K562 (cell line): ENCODE measurements at regions of chr16 and their contacts with region 1.

Region 1: DNA sequence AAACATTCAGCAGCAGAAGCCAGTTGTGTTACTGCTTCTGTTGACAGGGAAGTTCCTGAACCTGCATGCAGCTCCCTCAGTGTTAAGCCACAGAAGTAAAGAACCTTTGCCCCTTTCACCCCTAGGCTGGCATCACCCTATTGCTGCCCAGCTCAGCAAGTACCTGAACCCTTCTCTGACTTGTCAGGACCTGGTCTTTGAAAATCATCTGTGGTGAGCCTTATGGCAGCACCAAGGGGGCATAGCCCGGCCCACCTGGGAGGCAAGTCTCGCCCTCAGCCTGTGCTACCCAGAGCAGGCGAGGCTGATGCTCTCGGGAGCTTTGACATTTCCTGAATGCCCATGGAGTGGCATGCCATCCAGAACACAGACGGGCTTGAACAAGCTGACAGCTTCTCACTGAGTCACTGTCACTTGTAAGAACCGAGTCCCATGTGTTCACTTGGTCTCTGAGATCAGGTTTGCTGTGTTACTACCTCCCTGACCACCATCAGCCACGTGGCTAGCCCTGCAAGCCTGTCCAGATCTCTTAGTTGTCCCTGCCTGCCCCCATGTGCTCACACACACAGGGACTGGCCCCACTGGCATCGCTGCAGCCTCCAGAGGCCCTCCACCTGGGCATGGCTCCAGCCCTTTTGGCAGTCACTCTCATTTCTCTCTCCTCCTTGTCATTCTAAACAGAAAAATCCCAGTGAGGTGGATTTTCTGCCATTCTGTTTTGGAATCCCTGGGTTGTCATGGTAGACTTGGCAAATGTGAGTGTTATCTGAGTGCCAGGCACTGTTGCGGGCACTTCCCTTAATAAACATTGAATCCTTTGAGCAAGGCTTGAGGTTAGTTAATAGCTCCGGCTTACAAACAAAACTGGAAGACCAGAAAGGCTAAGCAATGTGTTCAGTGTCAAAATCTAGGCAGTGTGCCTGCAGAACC is 2.9 kb upstream of the CARMIL2 start:
- DNase-seq: no peak
- ATAC-seq: no peak; the same call in 2 of the 3 replicates
- H3K4me3 ChIP-seq: no peak overlapping the region
- H3K27ac ChIP-seq: no peak overlapping the region
- H3K4me1 ChIP-seq: peaks cover 0 to 26% of the 10 kb centered on the region in 2 experiments; a peak in 2 of 5 replicates
- H3K27me3 ChIP-seq: peaks cover 0 to 5% of the 10 kb centered on the region in 2 experiments; a peak in 1 of 5 replicates
- CTCF ChIP-seq: 0 out of 6 replicates have a peak, but pooled peaks of 1 of the 3 experiments have one; percentile 12
- EP300 ChIP-seq: no peak
- POLR2A ChIP-seq: no peak
- RAD21 ChIP-seq: 0 out of 4 replicates have a peak, but pooled peaks of 1 of the 2 experiments have one; percentile 6

Region 2: DNA sequence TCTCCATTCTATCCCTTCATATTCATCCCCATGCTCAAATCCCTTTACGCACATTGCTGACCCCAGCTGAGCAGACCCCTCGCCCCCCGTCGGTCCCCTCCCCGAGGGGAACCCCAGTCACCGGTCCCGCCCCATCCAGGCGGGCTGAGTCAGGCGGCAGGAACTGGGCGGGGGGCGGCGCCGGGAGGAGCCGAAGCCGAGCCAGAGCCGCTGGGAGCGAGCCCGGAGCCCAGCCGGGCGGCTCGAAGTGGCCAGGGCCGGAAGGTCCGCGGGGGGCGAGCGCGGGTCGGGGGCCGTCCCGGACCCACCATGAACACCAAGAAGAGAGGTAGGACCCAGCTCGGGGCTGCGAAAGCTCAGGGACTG is 104.8 kb before region 1 on chr16:
- CTCF ChIA-PET with region 1: no interaction called
- POLR2A ChIA-PET with region 1: no interaction called
- in situ Hi-C with region 1: loop called (anchors 5 kb)
- intact Hi-C with region 1: no loop called
- DNase-seq: no peak
- ATAC-seq: no peak
- H3K4me3 ChIP-seq: no peak overlapping the region
- H3K27ac ChIP-seq: no peak overlapping the region
- H3K4me1 ChIP-seq: peaks cover 0 to 43% of the 10 kb centered on the region in 2 experiments; a peak in 2 of 5 replicates
- H3K27me3 ChIP-seq: no peaks in the 10 kb centered on the region
- CTCF ChIP-seq: no peak
- EP300 ChIP-seq: no peak
- POLR2A ChIP-seq: no peak
- RAD21 ChIP-seq: no peak

Region 3: GRCh38 chr16:67546761-67547422 is 95.2 kb before region 1 on chr16:
- CTCF ChIA-PET with region 1: interaction called, 32 read pairs
- POLR2A ChIA-PET with region 1: interaction called, 3 read pairs
- in situ Hi-C with region 1: no loop called
- intact Hi-C with region 1: loop called (anchors 1 kb)
- DNase-seq: peak; percentile 77 to 81 (median 78)
- ATAC-seq: peak; percentile 82
- H3K4me3 ChIP-seq: no peak overlapping the region
- H3K27ac ChIP-seq: no peak overlapping the region
- H3K4me1 ChIP-seq: peaks cover 0 to 25% of the 10 kb centered on the region in 2 experiments; a peak in 2 of 5 replicates
- H3K27me3 ChIP-seq: no peaks in the 10 kb centered on the region
- CTCF ChIP-seq: peak; percentile 95 to 97 (median 97)
- EP300 ChIP-seq: no peak
- POLR2A ChIP-seq: no peak
- RAD21 ChIP-seq: peak; percentile 74 to 92

Region 4: GRCh38 chr16:67595033-67595355 is 47.0 kb before region 1 on chr16:
- CTCF ChIA-PET with region 1: no interaction called
- POLR2A ChIA-PET with region 1: no interaction called
- in situ Hi-C with region 1: no loop called
- intact Hi-C with region 1: no loop called
- DNase-seq: peak in 1 of 4 experiments; percentile 16
- ATAC-seq: peak; percentile 55; the same call in 1 of the 3 replicates
- H3K4me3 ChIP-seq: no peak overlapping the region
- H3K27ac ChIP-seq: no peak overlapping the region; the same call in 2 of the 3 replicates
- H3K4me1 ChIP-seq: peaks cover 0 to 5% of the 10 kb centered on the region in 2 experiments; a peak in 1 of 5 replicates
- H3K27me3 ChIP-seq: no peaks in the 10 kb centered on the region
- CTCF ChIP-seq: no peak
- EP300 ChIP-seq: no peak
- POLR2A ChIP-seq: no peak
- RAD21 ChIP-seq: no peak